Activated CD4-positive, alpha-beta T cell treated with anti-CD3 and anti-CD28 coated beads for 36 hours (primary cell): ENCODE measurements at regions of chr19 and their contacts with region 1.

Region 1: DNA sequence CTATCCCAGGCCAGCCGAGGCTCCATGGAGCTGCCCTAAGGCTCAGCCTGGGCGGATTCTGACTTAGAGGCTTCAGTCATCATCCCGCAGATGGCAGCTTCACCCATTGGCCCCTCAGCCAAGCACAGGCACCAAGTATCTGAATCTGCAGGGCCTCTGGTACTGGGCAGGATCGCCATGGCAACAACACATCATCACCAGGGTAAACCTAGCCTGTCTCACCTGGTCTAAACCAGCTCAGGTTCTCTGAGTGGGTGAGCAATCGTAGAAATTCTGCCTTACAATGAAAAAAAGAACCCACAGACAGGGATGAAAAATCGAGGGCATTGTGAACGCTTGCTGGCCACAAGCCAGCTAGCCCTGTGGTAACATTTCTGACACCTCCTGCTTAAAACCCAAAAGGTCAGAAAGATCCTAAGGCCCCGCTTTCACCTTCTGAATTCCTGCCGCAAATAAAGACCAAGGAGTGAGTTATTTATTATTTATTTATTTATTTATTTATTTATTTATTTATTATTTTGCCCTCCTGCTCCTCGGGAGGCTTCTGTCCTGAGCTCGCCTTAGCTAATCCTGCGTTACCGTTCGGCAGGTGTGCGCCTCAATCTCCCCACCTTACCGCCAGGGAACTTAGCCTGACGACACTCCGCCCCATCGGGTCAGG is 12.0 kb upstream of the CEACAM21 start:
- DNase-seq: peak; percentile 85
- ATAC-seq: peak; percentile 76
- H3K4me3 Mint-ChIP-seq: peak overlapping the region; percentile 76
- H3K27ac Mint-ChIP-seq: peak overlapping the region; percentile 61
- H3K4me1 Mint-ChIP-seq: peaks cover 65% of the 10 kb centered on the region
- H3K27me3 Mint-ChIP-seq: no peaks in the 10 kb centered on the region

Region 2: GRCh38 chr19:41397086-41398049 is 166.6 kb before region 1 on chr19 and contains the starts of genes BCKDHA and EXOSC5:
- CTCF ChIA-PET with region 1: interaction called, 3 read pairs
- POLR2A ChIA-PET with region 1: no interaction called
- intact Hi-C with region 1: loop called in 1 of 2 experiments (anchors 1 kb)
- DNase-seq: peak; percentile 99
- ATAC-seq: peak; percentile 100
- H3K4me3 Mint-ChIP-seq: peak within 1 kb of the TSS; percentile 97
- H3K27ac Mint-ChIP-seq: peak within 1 kb of the TSS; percentile 97
- H3K4me1 Mint-ChIP-seq: peaks cover 31% of the 10 kb centered on the region
- H3K27me3 Mint-ChIP-seq: no peaks in the 10 kb centered on the region
- total RNA-seq, gene BCKDHA: 14.5 to 25.4 TPM
- total RNA-seq, gene EXOSC5: 32.7 to 47.8 TPM

Region 3: DNA sequence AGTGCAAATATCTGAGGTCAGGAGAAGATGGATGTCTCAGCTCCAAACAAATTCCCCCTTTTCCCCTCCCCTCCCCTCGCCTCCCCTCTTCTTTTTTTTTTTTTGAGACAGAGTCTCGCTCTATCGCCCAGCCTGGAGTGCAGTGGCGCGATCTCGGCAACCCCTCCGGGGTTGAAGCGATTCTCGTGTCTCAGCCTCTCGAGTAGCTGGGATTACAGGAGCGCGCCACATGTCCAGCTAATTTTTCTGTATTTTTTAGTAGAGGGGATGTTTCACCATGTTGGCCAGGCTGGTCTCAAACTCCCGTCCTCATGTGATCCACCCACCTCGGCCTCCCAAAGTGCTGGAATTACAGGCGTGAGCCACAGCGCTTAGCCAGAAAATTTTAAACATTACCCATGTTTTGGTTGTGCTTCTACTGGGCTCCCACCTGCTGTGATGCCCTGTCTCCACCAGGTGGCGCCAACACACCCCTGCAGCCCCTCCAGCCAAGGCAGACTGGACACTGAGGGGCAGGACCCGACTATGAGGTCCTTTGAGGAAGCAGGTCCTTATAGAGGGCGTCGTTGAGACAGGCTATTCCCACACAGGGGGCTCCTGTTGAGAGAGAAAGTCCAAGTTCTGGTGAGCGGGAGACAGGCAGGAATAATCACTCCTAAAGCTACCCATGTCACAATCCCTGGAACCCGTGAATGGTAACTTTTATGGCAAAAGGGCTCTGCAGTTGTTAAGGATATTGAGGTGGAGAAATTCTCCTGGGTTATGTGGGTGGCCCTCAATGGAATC is 114.7 kb before region 1 on chr19:
- CTCF ChIA-PET with region 1: interaction called, 120 read pairs
- POLR2A ChIA-PET with region 1: no interaction called
- intact Hi-C with region 1: loop called (anchors 1 to 2 kb)
- DNase-seq: peak; percentile 85
- ATAC-seq: peak; percentile 93
- H3K4me3 Mint-ChIP-seq: peak overlapping the region; percentile 70
- H3K27ac Mint-ChIP-seq: no peak overlapping the region
- H3K4me1 Mint-ChIP-seq: peaks cover 11% of the 10 kb centered on the region
- H3K27me3 Mint-ChIP-seq: peaks cover 12% of the 10 kb centered on the region

Region 4: GRCh38 chr19:41521931-41522555 is 41.9 kb before region 1 on chr19:
- CTCF ChIA-PET with region 1: no interaction called
- POLR2A ChIA-PET with region 1: interaction called, 3 read pairs
- intact Hi-C with region 1: loop called in 1 of 2 experiments (anchors 1 kb)
- DNase-seq: peak; percentile 64
- ATAC-seq: peak; percentile 51
- H3K4me3 Mint-ChIP-seq: peak overlapping the region; percentile 66
- H3K27ac Mint-ChIP-seq: peak overlapping the region; percentile 89
- H3K4me1 Mint-ChIP-seq: peaks cover 20% of the 10 kb centered on the region
- H3K27me3 Mint-ChIP-seq: peaks cover 14% of the 10 kb centered on the region

Region 5: GRCh38 chr19:41575998-41576397 is 12.0 kb after region 1 on chr19 and contains the start of gene CEACAM21:
- CTCF ChIA-PET with region 1: interaction called, 31 read pairs
- POLR2A ChIA-PET with region 1: no interaction called
- intact Hi-C with region 1: no loop called
- DNase-seq: peak; percentile 75
- ATAC-seq: peak; percentile 100
- H3K4me3 Mint-ChIP-seq: peak within 1 kb of the TSS; percentile 70
- H3K27ac Mint-ChIP-seq: peak within 1 kb of the TSS; percentile 83
- H3K4me1 Mint-ChIP-seq: peaks cover 24% of the 10 kb centered on the region
- H3K27me3 Mint-ChIP-seq: no peaks in the 10 kb centered on the region
- total RNA-seq, gene CEACAM21: 22.1 to 27.6 TPM

Region 6: GRCh38 chr19:41626877-41627276 is 62.9 kb after region 1 on chr19 and contains the start of gene CEACAM4:
- CTCF ChIA-PET with region 1: no interaction called
- POLR2A ChIA-PET with region 1: no interaction called
- intact Hi-C with region 1: no loop called
- DNase-seq: no peak
- ATAC-seq: no peak
- H3K4me3 Mint-ChIP-seq: no peak within 1 kb of the TSS
- H3K27ac Mint-ChIP-seq: no peak within 1 kb of the TSS
- H3K4me1 Mint-ChIP-seq: no peaks in the 10 kb centered on the region
- H3K27me3 Mint-ChIP-seq: peaks cover 10% of the 10 kb centered on the region
- total RNA-seq, gene CEACAM4: not detected

Region 7: GRCh38 chr19:41657157-41657556 is 93.2 kb after region 1 on chr19:
- CTCF ChIA-PET with region 1: no interaction called
- POLR2A ChIA-PET with region 1: no interaction called
- intact Hi-C with region 1: no loop called
- DNase-seq: no peak
- ATAC-seq: no peak
- H3K4me3 Mint-ChIP-seq: no peak overlapping the region
- H3K27ac Mint-ChIP-seq: no peak overlapping the region
- H3K4me1 Mint-ChIP-seq: peaks cover 6% of the 10 kb centered on the region
- H3K27me3 Mint-ChIP-seq: peaks cover 41% of the 10 kb centered on the region